Body of pancreas (tissue), 4 donors: ENCODE measurements at regions of chr9 and their contacts with region 1.

Region 1: GRCh38 chr9:94213511-94214124 is 45.5 kb upstream of the ZNF169 start:
- DNase-seq: peak; percentile 72 to 81 (median 76)
- ATAC-seq: peak; percentile 91
- H3K4me3 ChIP-seq: no peak overlapping the region
- H3K27ac ChIP-seq: no peak overlapping the region
- H3K4me1 ChIP-seq: no peaks in the 10 kb centered on the region
- H3K27me3 ChIP-seq: peaks cover 0 to 4% of the 10 kb centered on the region in 2 donors
- CTCF ChIP-seq: peak; percentile 49 to 89 (median 84)
- POLR2A ChIP-seq: no peak

Region 2: GRCh38 chr9:93682232-93682968 is 531.2 kb before region 1 on chr9:
- intact Hi-C with region 1: loop called (anchors 10 kb)
- DNase-seq: peak; percentile 57 to 74 (median 66)
- ATAC-seq: peak; percentile 63
- H3K4me3 ChIP-seq: no peak overlapping the region
- H3K27ac ChIP-seq: no peak overlapping the region
- H3K4me1 ChIP-seq: peaks cover 6% of the 10 kb centered on the region
- H3K27me3 ChIP-seq: no peaks in the 10 kb centered on the region
- CTCF ChIP-seq: peak; percentile 66 to 87 (median 77)
- POLR2A ChIP-seq: no peak

Region 3: DNA sequence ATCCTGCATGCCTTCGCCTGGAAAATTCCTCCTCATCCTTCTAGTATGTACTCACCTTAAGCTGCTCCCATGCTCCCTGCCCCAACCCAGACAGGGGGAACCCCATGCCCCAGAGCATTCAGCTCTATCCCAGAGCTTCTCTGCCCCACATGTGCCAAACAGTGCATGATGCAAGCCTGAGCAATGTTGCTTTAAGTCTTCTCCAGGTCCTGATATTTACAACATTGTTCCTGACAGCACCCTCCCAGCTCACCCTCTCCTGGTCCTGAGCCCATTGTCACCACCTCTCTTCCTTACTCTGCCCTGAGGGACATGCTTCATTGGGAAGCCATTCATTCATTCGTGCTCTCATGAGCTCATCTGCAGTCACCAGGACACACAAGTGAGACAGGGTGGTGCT is 235.1 kb before region 1 on chr9:
- intact Hi-C with region 1: no loop called
- DNase-seq: no peak
- ATAC-seq: no peak
- H3K4me3 ChIP-seq: no peak overlapping the region
- H3K27ac ChIP-seq: no peak overlapping the region
- H3K4me1 ChIP-seq: no peaks in the 10 kb centered on the region
- H3K27me3 ChIP-seq: no peaks in the 10 kb centered on the region
- CTCF ChIP-seq: no peak
- POLR2A ChIP-seq: no peak

Region 4: DNA sequence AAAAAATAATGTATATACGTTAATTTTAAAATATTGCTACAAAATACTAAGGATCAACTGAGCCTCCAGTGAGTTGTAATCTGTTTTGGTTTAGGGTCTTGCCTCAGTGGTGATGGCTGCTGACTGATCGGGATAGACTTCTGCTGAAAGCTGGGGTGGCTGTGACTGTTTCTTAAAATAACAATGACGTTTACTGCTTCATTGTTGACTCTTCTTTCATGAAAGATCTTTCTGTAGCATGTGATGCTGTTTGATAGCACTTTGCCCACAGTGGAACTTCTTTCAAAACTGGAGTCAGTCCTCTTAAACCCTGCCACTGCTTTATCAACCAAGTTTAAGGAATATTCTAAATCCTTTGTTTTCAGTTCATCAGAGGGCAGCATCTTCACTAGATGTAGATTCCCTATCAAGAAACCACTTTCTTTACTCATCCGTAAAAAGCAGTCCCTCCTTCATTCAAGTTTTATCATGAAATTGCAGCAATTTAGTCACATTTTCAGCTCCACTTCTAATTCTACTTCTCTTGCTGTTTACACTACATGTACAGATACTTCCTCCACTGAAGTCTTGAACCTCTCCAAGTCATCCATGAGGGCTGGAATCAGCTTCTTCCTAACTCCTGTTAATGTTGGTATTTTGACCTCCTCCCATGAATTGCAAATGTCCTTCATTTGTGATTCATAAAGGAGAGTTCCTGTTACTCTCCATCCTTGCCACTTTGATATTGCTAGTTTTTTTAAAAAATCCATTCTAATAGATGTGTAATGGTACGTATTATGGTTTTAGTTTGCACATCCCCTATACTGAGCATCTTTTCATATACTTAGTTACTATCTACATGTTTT is 170.9 kb before region 1 on chr9:
- intact Hi-C with region 1: no loop called
- DNase-seq: no peak
- ATAC-seq: no peak
- H3K4me3 ChIP-seq: no peak overlapping the region
- H3K27ac ChIP-seq: no peak overlapping the region
- H3K4me1 ChIP-seq: no peaks in the 10 kb centered on the region
- H3K27me3 ChIP-seq: no peaks in the 10 kb centered on the region
- CTCF ChIP-seq: no peak
- POLR2A ChIP-seq: no peak

Region 5: GRCh38 chr9:94061864-94062263 is 151.8 kb before region 1 on chr9:
- intact Hi-C with region 1: loop called (anchors 5 kb)
- DNase-seq: no peak
- ATAC-seq: no peak
- H3K4me3 ChIP-seq: no peak overlapping the region
- H3K27ac ChIP-seq: no peak overlapping the region
- H3K4me1 ChIP-seq: peaks cover 21% of the 10 kb centered on the region
- H3K27me3 ChIP-seq: no peaks in the 10 kb centered on the region
- CTCF ChIP-seq: no peak
- POLR2A ChIP-seq: no peak

Region 6: GRCh38 chr9:94639061-94639998 is 425.7 kb after region 1 on chr9 and contains the start of gene FBP1:
- intact Hi-C with region 1: no loop called
- DNase-seq: peak; percentile 61 to 72 (median 67)
- ATAC-seq: peak; percentile 75
- H3K4me3 ChIP-seq: peak within 1 kb of the TSS; percentile 61 to 71
- H3K27ac ChIP-seq: peak within 1 kb of the TSS; percentile 43 to 82 (median 72)
- H3K4me1 ChIP-seq: peaks cover 22% of the 10 kb centered on the region
- H3K27me3 ChIP-seq: no peaks in the 10 kb centered on the region
- CTCF ChIP-seq: no peak
- POLR2A ChIP-seq: peak; percentile 36 to 59 (median 55)
- total RNA-seq, gene FBP1: 28.5 to 39.9 TPM

Region 7: DNA sequence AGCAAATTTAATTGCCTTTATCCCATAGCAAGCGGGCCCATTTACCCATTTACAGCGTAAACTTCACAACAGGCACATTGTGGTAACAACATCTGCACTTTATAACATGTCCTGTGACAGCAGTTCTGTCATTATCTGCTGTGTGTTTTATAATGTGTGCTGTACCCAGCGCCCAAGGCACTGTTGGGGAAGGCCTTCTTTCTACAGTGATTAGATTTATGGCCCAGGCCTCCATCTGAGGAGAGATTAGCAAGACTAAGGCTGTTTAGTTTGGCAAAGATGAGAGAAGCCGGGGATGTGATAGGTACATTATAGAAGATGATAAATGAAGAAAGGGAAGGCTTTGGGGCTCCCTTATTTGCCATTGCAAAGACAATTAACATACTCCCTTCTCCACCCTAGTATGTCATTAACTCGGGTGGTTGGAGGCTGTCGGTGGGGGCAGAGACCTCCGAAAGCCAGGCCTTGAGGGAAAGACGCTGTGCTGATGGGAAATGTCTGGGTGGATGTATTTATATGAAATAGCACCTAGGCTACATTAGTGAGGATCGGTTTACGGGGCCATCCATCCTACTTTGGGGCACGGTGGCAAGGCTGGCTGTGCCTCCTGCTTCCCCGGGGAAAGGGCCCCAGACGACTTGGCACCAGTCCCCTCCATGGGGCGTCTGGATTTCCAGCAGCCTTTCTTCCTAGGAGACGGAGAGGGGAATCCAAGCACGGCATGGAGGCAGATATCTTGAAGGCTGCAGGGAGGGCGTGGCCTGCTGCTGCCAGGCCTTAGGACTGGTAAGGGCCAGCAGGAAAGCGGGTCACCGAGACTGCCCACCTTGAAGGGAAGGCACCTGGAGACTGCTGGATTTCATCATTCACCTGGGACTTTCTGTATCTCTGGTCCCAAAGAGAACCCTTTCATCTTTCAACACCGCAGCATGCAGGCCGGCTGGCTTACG is 1367.5 kb after region 1 on chr9:
- intact Hi-C with region 1: no loop called
- DNase-seq: no peak
- ATAC-seq: no peak
- H3K4me3 ChIP-seq: no peak overlapping the region
- H3K27ac ChIP-seq: no peak overlapping the region
- H3K4me1 ChIP-seq: no peaks in the 10 kb centered on the region
- H3K27me3 ChIP-seq: no peaks in the 10 kb centered on the region
- CTCF ChIP-seq: no peak
- POLR2A ChIP-seq: no peak